Mammary epithelial cell (primary cell): ENCODE measurements at regions of chr16 and their contacts with region 1.

Region 1: DNA sequence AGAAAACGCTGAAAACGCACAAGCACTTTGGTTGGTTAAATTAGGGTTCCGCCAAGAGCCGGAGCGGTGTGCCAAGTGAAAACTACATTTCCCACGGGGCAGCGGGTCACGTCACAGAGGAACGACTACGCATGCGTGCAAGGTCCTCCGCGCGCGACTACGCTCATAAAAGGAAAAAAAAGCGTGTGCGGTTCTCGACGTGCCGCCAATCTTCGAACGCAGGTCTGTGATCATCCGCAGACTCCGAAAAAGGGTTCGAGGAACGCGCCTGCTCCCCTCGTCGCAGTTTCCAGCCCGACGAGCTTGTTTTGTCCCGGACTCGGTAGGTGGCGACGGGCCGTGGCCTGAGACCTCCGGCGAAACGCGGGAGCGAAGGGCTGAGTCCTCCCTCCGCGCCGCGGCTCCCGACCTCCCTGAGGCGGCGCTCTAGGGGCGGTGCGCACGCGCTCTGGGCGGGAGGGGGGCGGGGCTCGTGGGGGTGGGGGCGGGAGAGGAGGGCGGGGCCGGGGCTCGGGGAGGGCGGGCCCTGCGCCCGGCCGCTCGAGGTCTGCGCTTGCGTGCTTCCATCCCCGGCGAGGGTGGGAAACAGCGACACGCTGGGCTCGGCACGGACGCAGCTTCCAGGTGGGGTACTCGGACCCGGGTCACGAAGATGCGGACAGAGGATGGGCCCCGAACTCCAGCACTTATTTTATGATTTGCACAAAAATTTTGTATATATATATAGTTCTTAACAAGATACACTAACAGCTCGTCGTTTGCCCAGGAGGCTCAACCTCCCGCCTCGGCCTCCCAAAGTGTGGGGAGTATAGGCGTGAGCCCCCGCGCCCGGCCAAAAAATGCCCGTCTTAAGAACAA is at the start of gene SGF29:
- DNase-seq: peak; percentile 86
- H3K4me3 ChIP-seq: peak within 1 kb of the TSS; percentile 45 to 91 (median 69)
- H3K27ac ChIP-seq: peak within 1 kb of the TSS; percentile 66
- H3K4me1 ChIP-seq: peaks cover 7% of the 10 kb centered on the region
- H3K27me3 ChIP-seq: no peaks in the 10 kb centered on the region
- CTCF ChIP-seq: peak in 1 of 2 donors; percentile 33
- total RNA-seq, gene SGF29: 12.7 to 17.7 TPM

Region 2: GRCh38 chr16:28291873-28292660 is 261.9 kb before region 1 on chr16 and contains the start of gene SBK1:
- CTCF ChIA-PET with region 1: no interaction called
- dilution Hi-C with region 1: no loop called
- in situ Hi-C with region 1: loop called in 1 of 2 experiments (anchors 25 kb)
- intact Hi-C with region 1: no loop called
- DNase-seq: peak; percentile 61
- H3K4me3 ChIP-seq: peak within 1 kb of the TSS; percentile 30 to 61 (median 53)
- H3K27ac ChIP-seq: no peak within 1 kb of the TSS
- H3K4me1 ChIP-seq: peaks cover 8% of the 10 kb centered on the region
- H3K27me3 ChIP-seq: peaks cover 10% of the 10 kb centered on the region
- CTCF ChIP-seq: no peak
- total RNA-seq, gene SBK1: 0.17 to 0.38 TPM

Region 3: GRCh38 chr16:28317040-28317880 is 236.7 kb before region 1 on chr16:
- CTCF ChIA-PET with region 1: no interaction called
- dilution Hi-C with region 1: no loop called
- in situ Hi-C with region 1: no loop called
- intact Hi-C with region 1: loop called (anchors 1 kb)
- DNase-seq: peak; percentile 17
- H3K4me3 ChIP-seq: no peak overlapping the region
- H3K27ac ChIP-seq: no peak overlapping the region
- H3K4me1 ChIP-seq: peaks cover 10% of the 10 kb centered on the region
- H3K27me3 ChIP-seq: no peaks in the 10 kb centered on the region
- CTCF ChIP-seq: peak; percentile 66 to 94

Region 4: DNA sequence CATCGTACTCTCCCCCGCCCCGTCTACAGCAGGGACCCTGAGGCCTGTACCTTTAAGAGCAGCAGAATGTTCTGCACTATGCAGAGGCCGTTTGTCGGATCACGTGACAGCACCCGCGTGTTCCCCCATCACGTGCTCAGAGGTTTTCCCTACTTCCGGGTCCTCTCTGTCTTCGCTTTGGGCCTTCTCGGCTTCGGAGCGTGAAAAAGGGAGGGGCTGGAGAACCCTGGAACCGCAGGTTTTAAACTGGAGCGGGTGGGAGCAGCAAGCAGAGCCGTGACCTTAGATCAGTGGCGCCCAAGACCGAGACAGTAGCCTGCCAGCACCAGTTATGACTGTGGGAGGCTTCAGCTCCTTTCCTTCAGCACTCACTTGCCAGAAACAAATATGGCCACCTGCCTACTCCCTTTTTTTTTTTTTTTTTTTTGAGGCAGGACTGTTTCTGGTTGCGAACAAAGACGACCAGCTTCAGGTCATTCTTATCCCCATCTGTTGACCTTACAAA is 62.0 kb before region 1 on chr16 and contains the start of gene CLN3:
- CTCF ChIA-PET with region 1: no interaction called
- dilution Hi-C with region 1: no loop called
- in situ Hi-C with region 1: loop called in 1 of 2 experiments (anchors 10 kb)
- intact Hi-C with region 1: no loop called
- DNase-seq: peak; percentile 91
- H3K4me3 ChIP-seq: peak within 1 kb of the TSS; percentile 66 to 78 (median 78)
- H3K27ac ChIP-seq: peak within 1 kb of the TSS; percentile 95
- H3K4me1 ChIP-seq: peaks cover 7% of the 10 kb centered on the region
- H3K27me3 ChIP-seq: no peaks in the 10 kb centered on the region
- CTCF ChIP-seq: no peak
- total RNA-seq, gene CLN3: 14.2 to 23.2 TPM

Region 5: DNA sequence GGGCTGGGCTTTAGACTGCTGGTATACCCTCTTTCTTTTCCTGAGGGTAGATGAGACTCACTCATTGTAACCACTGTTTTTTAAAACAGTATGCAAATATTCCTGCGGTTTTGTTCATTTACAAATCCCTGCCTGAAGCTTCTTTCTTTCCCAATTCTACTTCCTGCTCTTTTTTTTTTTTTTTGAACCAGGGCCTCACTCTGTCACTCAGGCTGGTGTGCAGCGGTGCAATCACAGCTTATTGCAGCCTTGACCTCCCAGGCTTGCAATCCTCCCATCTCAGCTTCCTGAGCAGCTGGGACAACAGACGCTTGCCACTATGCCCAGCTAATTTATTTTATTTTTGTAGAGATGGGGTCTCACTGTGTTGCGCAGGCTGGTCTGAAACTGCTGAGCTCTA is 63.9 kb after region 1 on chr16:
- CTCF ChIA-PET with region 1: no interaction called
- dilution Hi-C with region 1: no loop called
- in situ Hi-C with region 1: no loop called
- intact Hi-C with region 1: loop called (anchors 5 kb)
- DNase-seq: no peak
- H3K4me3 ChIP-seq: no peak overlapping the region
- H3K27ac ChIP-seq: no peak overlapping the region
- H3K4me1 ChIP-seq: peaks cover 3% of the 10 kb centered on the region
- H3K27me3 ChIP-seq: no peaks in the 10 kb centered on the region
- CTCF ChIP-seq: no peak